ENCODE measurements at regions of chr17 and their contacts with region 1.

Region 1: DNA sequence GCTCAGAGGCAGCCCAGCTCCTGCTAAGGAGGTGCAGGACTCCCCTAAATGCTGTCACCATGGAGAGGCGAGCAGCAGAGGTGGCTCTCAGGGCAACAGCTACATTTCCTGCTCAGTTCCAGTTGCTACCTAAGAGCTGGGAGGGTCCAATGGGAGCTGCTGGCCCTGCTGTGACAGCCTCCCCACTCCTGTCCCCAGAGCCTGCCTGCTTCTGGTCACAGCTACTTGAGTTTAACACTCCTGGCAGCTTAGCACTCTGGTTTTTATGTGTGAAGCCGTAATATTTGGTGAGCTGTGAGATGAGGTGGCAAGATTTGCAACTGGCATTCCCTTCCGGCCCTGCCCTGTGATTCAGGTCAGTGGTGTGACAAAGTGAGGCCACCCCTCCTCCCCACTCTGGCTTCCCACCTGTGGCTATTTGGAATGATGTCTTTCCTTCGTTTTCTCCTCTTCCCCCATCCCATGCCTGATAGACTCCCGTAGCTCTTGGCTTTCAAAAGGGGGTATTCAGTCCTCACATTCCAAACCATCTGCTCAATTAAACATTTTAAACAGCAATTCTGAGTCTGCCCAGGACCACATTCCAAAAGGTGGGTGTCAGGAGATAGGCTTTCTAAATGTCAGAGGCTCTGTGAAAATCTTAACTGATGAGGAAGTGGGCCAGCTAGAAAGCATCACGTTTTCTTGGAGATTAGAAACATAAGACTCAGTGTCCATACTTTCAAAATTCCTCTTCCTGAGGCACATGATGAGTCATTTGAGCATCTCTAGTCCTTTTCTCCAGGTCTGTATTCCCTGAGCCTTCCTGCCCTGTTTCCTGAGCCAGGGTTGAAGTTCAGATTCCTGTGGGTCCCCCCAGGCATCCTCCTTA is 42.6 kb upstream of the SKAP1 start:
- DNase-seq: no peak
- ATAC-seq: peak; percentile 95
- H3K4me3 ChIP-seq: 0 out of 2 replicates have a peak overlapping the region, but pooled peaks have one; percentile 17
- H3K27ac ChIP-seq: no peak overlapping the region
- H3K4me1 ChIP-seq: peaks cover 16% of the 10 kb centered on the region
- H3K27me3 ChIP-seq: no peaks in the 10 kb centered on the region
- CTCF ChIP-seq: no peak
- EP300 ChIP-seq: peak; percentile 36 to 55; a peak in 1 of 4 replicates
- POLR2A ChIP-seq: no peak
- RAD21 ChIP-seq: no peak

Region 2: DNA sequence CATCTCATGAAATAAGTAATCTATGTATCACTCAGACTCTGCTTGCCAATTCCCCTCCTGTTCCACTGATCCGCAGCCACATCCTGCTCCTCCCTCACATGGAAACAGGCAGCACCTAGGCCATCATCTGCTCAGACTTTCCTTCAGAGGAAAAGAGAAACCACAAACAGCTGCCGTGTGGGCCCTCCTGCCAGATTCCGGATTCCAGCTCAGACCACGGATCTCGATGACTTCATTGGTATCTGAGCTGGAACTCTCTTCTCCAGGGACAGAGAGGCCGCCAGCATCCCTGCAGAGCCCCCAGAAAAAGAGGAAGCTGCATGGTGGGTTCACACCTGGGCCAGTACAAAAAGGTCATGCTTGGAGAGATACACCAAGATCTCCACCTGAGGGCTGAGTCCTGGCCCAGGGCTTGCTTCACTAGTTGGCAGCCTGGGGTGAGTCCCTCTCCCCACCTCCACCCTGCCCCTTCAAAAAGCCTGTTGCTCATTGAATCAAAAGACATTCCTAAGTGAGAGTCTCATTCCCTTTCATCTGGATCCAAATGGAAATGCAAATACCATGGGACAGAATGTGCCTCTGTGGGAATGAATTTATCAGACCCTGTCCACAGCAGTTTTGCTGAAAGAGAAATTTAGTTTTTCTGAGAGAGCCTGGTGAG is 11.0 kb after region 1 on chr17:
- CTCF ChIA-PET with region 1: interaction called, 7 read pairs
- POLR2A ChIA-PET with region 1: interaction called, 11 read pairs
- RAD21 ChIA-PET with region 1: interaction called, 9 read pairs
- SMC1A ChIA-PET with region 1: interaction called, 17 read pairs
- in situ Hi-C with region 1: no loop called
- intact Hi-C with region 1: no loop called
- DNase-seq: no peak
- ATAC-seq: peak; percentile 87
- H3K4me3 ChIP-seq: no peak overlapping the region
- H3K27ac ChIP-seq: no peak overlapping the region
- H3K4me1 ChIP-seq: peaks cover 19% of the 10 kb centered on the region
- H3K27me3 ChIP-seq: no peaks in the 10 kb centered on the region
- CTCF ChIP-seq: no peak
- EP300 ChIP-seq: no peak
- POLR2A ChIP-seq: no peak
- RAD21 ChIP-seq: no peak

Region 3: GRCh38 chr17:48610282-48611211 is 137.9 kb after region 1 on chr17 and contains the start of gene HOXB7:
- CTCF ChIA-PET with region 1: no interaction called
- POLR2A ChIA-PET with region 1: no interaction called
- RAD21 ChIA-PET with region 1: no interaction called
- SMC1A ChIA-PET with region 1: no interaction called
- in situ Hi-C with region 1: no loop called
- intact Hi-C with region 1: no loop called
- DNase-seq: no peak
- ATAC-seq: peak; percentile 77
- H3K4me3 ChIP-seq: peak within 1 kb of the TSS; percentile 86
- H3K27ac ChIP-seq: peak within 1 kb of the TSS; percentile 1
- H3K4me1 ChIP-seq: peaks cover 11% of the 10 kb centered on the region
- H3K27me3 ChIP-seq: peaks cover 6 to 13% of the 10 kb centered on the region in 2 experiments; a peak in 3 of 4 replicates
- CTCF ChIP-seq: no peak
- EP300 ChIP-seq: no peak
- POLR2A ChIP-seq: peak; percentile 68; the same call in 1 of the 2 replicates
- RAD21 ChIP-seq: no peak
- polyA plus RNA-seq, gene HOXB7: 2.8 to 3.4 TPM

Measured in GM12878 (cell line).